ENCODE measurements at regions of chr6 and their contacts with region 1.

Region 1: DNA sequence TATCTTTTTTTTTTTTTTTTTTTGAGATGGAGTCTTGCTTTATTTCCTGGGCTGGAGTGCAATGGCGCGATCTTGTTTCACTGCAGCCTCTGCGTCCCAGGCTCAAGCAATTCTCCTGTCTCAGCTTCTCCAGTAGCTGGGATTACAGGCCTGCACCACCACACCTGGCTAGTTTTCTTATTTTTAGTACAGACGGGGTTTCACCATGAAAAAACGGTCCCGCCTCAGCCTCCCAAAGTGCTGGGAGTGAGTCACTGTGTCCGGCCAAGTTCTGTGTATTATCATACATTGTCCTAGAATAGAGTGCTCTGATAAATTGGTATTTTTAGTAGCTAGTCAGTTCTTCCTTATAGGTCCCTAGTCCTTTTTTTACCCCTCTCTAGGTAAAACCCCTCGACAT is 2.8 kb downstream of the SNRPC start:
- DNase-seq: no peak
- ATAC-seq: no peak
- H3K4me3 ChIP-seq: no peak overlapping the region
- H3K27ac ChIP-seq: no peak overlapping the region
- H3K4me1 ChIP-seq: peaks cover 14% of the 10 kb centered on the region
- H3K27me3 ChIP-seq: no peaks in the 10 kb centered on the region
- CTCF ChIP-seq: no peak
- POLR2A ChIP-seq: no peak

Region 2: GRCh38 chr6:34872332-34872731 is 112.2 kb after region 1 on chr6:
- intact Hi-C with region 1: loop called (anchors 10 kb)
- DNase-seq: no peak
- ATAC-seq: no peak
- H3K4me3 ChIP-seq: no peak overlapping the region
- H3K27ac ChIP-seq: no peak overlapping the region
- H3K4me1 ChIP-seq: no peaks in the 10 kb centered on the region
- H3K27me3 ChIP-seq: no peaks in the 10 kb centered on the region
- CTCF ChIP-seq: no peak
- POLR2A ChIP-seq: no peak

Region 3: DNA sequence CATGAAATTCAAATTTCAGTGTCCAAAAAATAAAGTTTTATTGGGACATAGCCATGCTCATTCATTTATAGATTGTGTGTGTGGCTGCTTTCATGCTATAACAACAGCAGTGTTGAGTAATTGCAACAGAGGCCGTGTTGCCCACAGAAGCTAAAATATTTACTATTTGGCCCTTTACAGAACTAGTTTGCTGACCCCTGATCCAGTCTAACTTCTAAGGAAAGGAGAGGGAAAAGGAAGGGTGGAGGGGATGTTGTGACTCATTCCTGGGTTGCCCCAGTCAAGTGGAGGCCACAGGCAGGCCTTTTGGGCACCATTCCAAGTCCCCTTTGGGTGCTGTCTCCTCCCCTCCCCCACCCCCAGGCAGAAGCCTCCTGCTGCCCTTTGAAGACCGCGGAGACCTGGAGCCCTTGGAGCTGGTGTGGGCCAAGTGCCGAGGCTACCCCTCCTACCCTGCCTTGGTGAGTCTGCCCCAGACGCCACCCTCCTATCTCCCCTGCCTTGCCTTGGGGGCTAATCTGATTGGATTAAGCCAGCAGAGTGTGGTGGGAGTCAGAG is 1464.9 kb after region 1 on chr6:
- intact Hi-C with region 1: no loop called
- DNase-seq: no peak
- ATAC-seq: no peak
- H3K4me3 ChIP-seq: no peak overlapping the region
- H3K27ac ChIP-seq: no peak overlapping the region
- H3K4me1 ChIP-seq: no peaks in the 10 kb centered on the region
- H3K27me3 ChIP-seq: no peaks in the 10 kb centered on the region
- CTCF ChIP-seq: no peak
- POLR2A ChIP-seq: no peak

Measured in body of pancreas (tissue), 4 donors.